ENCODE measurements at regions of chr3 and their contacts with region 1.

Region 1: DNA sequence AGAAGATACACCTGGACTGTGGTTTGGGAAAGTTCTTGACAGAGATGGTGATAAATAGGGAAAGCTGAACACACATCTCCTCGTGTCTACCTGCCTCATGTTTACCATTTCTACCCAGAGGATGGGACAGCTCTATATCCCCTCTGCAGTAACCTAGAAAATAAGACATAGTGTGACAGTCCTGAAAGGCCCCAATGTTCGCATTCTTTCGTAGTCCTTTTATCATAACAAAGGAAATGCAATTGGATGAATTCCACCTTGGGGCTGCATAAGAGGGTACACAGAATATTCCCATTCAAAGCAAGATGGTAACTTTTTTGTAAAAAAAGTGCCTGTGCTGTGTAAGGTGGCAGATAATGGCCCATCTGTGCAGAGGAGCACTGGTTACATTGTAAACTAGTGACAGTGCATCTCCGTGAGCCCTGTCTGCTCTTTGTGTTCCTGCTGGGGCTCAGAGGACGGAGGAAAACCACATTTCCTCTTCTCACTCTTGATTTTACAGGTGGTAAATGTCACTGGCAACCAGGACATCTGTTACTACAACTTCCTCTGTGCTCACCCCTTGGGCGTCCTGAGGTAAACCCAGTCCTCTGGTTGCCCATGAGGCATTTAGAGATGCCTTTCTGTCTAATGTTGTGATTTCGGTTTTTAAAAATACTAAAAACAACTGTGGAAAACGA is 74.3 kb downstream of the SIDT1 start:
- DNase-seq: no peak
- H3K4me3 ChIP-seq: no peak overlapping the region
- H3K27ac ChIP-seq: no peak overlapping the region
- H3K4me1 ChIP-seq: no peaks in the 10 kb centered on the region
- H3K27me3 ChIP-seq: peaks cover 6% of the 10 kb centered on the region
- CTCF ChIP-seq: no peak

Region 2: GRCh38 chr3:113495035-113495434 is 111.6 kb before region 1 on chr3:
- dilution Hi-C with region 1: loop called (anchors 25 kb)
- DNase-seq: no peak
- H3K4me3 ChIP-seq: no peak overlapping the region
- H3K27ac ChIP-seq: no peak overlapping the region
- H3K4me1 ChIP-seq: no peaks in the 10 kb centered on the region
- H3K27me3 ChIP-seq: no peaks in the 10 kb centered on the region
- CTCF ChIP-seq: peak in 2 of 3 experiments; percentile 30 to 36

Region 3: GRCh38 chr3:113712129-113712528 is 105.5 kb after region 1 on chr3:
- dilution Hi-C with region 1: no loop called
- DNase-seq: no peak
- H3K4me3 ChIP-seq: no peak overlapping the region
- H3K27ac ChIP-seq: no peak overlapping the region
- H3K4me1 ChIP-seq: peaks cover 3% of the 10 kb centered on the region
- H3K27me3 ChIP-seq: no peaks in the 10 kb centered on the region
- CTCF ChIP-seq: no peak

Region 4: GRCh38 chr3:113754494-113755159 is 147.9 kb after region 1 on chr3:
- dilution Hi-C with region 1: no loop called
- DNase-seq: no peak
- H3K4me3 ChIP-seq: no peak overlapping the region
- H3K27ac ChIP-seq: no peak overlapping the region
- H3K4me1 ChIP-seq: peaks cover 2% of the 10 kb centered on the region
- H3K27me3 ChIP-seq: no peaks in the 10 kb centered on the region
- CTCF ChIP-seq: no peak